CD8-positive, alpha-beta T cell (primary cell): ENCODE measurements at regions of chr20 and their contacts with region 1.

Region 1: DNA sequence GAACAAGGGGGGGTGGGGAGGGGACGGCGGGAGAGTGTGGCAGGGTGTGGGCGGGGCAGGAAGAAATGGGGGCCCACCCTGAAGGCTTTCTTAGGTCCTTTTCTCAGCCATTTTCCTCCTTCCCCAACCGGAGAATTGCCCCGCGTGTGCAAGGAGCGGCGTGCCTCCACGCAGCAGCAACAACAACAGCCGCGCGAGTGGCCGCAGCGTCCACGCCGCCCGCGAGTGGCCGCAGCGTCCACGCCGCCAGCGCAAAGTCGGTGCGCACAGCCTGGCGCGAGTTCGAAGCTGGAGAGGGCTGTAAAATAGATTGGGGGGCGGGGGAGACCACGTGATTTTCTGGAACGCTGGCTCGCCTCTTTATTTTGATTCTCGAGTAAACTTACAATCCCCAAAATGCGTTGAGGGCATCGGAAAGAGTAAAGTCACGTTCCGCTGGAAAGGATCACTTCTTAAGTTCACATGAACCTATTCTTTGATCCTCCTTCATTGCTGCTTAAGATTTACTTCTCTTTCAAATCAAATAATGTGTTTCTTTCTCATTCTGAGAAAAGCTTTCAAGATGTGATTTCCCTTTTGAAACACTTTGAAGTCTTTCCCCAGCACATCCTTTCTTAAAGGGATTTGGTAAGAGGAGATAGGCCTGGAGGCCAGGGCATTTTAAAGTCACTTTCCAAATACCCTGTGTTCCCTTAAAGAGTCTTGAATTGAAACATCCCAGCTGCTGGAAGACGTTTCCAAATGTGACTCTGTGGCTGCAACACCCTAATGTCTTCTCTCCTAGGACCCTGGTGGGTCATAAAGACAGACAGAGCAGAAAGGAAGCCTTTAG is 66.7 kb upstream of the ZNF217 start:
- DNase-seq: peak in 6 of 9 experiments; percentile 10 to 68 (median 44)
- ATAC-seq: peak; percentile 47
- H3K4me3 ChIP-seq: peak overlapping the region; percentile 45 to 61
- H3K4me3 Mint-ChIP-seq: peak overlapping the region; percentile 87
- H3K27ac ChIP-seq: peak overlapping the region; percentile 49 to 67
- H3K27ac Mint-ChIP-seq: peak overlapping the region; percentile 94
- H3K4me1 ChIP-seq: peaks cover 53% of the 10 kb centered on the region
- H3K4me1 Mint-ChIP-seq: peaks cover 62% of the 10 kb centered on the region
- H3K27me3 ChIP-seq: no peaks in the 10 kb centered on the region
- H3K27me3 Mint-ChIP-seq: no peaks in the 10 kb centered on the region
- CTCF ChIP-seq: no peak

Region 2: GRCh38 chr20:53080969-53081871 is 579.1 kb before region 1 on chr20:
- CTCF ChIA-PET with region 1: no interaction called
- POLR2A ChIA-PET with region 1: no interaction called
- intact Hi-C with region 1: no loop called
- DNase-seq: no peak
- ATAC-seq: no peak
- H3K4me3 ChIP-seq: no peak overlapping the region
- H3K4me3 Mint-ChIP-seq: no peak overlapping the region
- H3K27ac ChIP-seq: no peak overlapping the region
- H3K27ac Mint-ChIP-seq: no peak overlapping the region
- H3K4me1 ChIP-seq: peaks cover 5% of the 10 kb centered on the region
- H3K4me1 Mint-ChIP-seq: peaks cover 12% of the 10 kb centered on the region
- H3K27me3 ChIP-seq: no peaks in the 10 kb centered on the region
- H3K27me3 Mint-ChIP-seq: no peaks in the 10 kb centered on the region
- CTCF ChIP-seq: no peak

Region 3: GRCh38 chr20:53643031-53643832 is 17.1 kb before region 1 on chr20:
- CTCF ChIA-PET with region 1: interaction called, 6 read pairs
- POLR2A ChIA-PET with region 1: interaction called, 12 read pairs
- intact Hi-C with region 1: loop called (anchors 1 kb)
- DNase-seq: peak; percentile 39 to 88 (median 71)
- ATAC-seq: peak; percentile 93
- H3K4me3 ChIP-seq: peak overlapping the region; percentile 19 to 47
- H3K4me3 Mint-ChIP-seq: peak overlapping the region; percentile 68
- H3K27ac ChIP-seq: peak overlapping the region; percentile 67 to 80
- H3K27ac Mint-ChIP-seq: peak overlapping the region; percentile 92
- H3K4me1 ChIP-seq: peaks cover 37% of the 10 kb centered on the region
- H3K4me1 Mint-ChIP-seq: peaks cover 55% of the 10 kb centered on the region
- H3K27me3 ChIP-seq: no peaks in the 10 kb centered on the region
- H3K27me3 Mint-ChIP-seq: no peaks in the 10 kb centered on the region
- CTCF ChIP-seq: no peak

Region 4: GRCh38 chr20:53750827-53751619 is 90.7 kb after region 1 on chr20:
- CTCF ChIA-PET with region 1: no interaction called
- POLR2A ChIA-PET with region 1: interaction called, 5 read pairs
- intact Hi-C with region 1: loop called in 1 of 2 experiments (anchors 5 kb)
- DNase-seq: peak in 8 of 9 experiments; percentile 6 to 79 (median 38)
- ATAC-seq: peak; percentile 56
- H3K4me3 ChIP-seq: no peak overlapping the region
- H3K4me3 Mint-ChIP-seq: peak overlapping the region; percentile 56
- H3K27ac ChIP-seq: peak overlapping the region; percentile 13 to 77
- H3K27ac Mint-ChIP-seq: peak overlapping the region; percentile 92
- H3K4me1 ChIP-seq: peaks cover 68% of the 10 kb centered on the region
- H3K4me1 Mint-ChIP-seq: peaks cover 70% of the 10 kb centered on the region
- H3K27me3 ChIP-seq: no peaks in the 10 kb centered on the region
- H3K27me3 Mint-ChIP-seq: no peaks in the 10 kb centered on the region
- CTCF ChIP-seq: no peak